ENCODE measurements at regions of chr5 and their contacts with region 1.

Region 1: DNA sequence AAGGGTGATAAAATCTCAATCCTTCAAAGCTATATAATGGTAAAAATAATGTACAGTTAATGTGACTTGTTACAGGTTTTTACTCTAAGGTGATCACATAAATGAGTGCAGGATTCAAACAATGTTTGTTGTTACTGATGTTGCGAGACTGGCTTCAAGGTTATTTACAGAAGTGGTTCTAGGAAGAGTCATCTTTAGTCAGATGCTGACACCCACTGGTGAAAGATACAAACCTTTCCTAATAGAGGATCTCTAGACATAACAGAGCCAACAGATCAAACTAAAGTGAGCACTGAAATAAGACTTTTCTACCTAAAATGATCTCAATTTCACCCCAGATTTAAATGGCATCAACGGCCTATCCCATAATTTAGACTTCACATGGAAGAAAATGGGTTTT is 20.2 kb downstream of the ARSB start:
- DNase-seq: peak; percentile 20
- H3K4me3 ChIP-seq: no peak overlapping the region
- H3K27ac ChIP-seq: no peak overlapping the region
- H3K4me1 ChIP-seq: no peaks in the 10 kb centered on the region
- H3K27me3 ChIP-seq: no peaks in the 10 kb centered on the region
- CTCF ChIP-seq: peak in 2 of 4 experiments; percentile 52 to 59
- POLR2A ChIP-seq: no peak

Region 2: GRCh38 chr5:78320401-78320800 is 644.5 kb before region 1 on chr5:
- intact Hi-C with region 1: loop called (anchors 10 kb)
- DNase-seq: no peak
- H3K4me3 ChIP-seq: no peak overlapping the region
- H3K27ac ChIP-seq: no peak overlapping the region
- H3K4me1 ChIP-seq: no peaks in the 10 kb centered on the region
- H3K27me3 ChIP-seq: no peaks in the 10 kb centered on the region
- CTCF ChIP-seq: peak in 2 of 4 experiments; percentile 53 to 62
- POLR2A ChIP-seq: no peak

Region 3: DNA sequence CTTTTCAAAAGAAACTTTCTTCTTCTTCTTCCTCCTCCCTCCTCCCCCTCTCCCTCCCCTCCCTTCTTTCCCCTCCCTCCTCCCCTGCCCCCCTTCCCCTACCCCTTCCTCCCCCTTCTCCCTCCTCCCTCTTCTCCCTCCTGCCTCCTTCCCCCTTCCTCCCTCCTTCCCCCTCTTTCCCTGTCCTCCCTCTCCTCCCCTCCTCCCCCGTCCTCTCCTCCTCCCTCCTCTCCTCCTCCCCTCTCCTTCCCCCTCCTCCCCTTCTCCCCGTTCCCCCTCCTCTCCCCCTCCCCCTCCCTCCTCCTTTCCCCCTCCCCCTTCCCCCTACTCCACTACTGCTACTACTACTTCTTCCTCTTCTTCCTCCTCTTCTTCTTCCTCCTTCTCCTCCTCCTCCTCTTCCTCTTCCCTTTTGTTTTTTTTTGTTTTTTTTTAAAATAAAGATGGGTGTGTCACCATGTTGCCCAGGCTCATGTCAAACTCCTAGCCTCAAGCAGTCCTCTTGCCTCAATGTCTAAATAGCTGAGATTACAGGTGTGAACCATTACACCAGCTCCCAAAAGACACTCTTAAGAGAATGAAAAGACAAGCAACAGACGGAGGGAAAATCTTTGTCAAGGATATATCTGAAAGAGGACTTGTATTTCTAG is 517.0 kb before region 1 on chr5:
- intact Hi-C with region 1: no loop called
- DNase-seq: no peak
- H3K4me3 ChIP-seq: no peak overlapping the region
- H3K27ac ChIP-seq: no peak overlapping the region
- H3K4me1 ChIP-seq: no peaks in the 10 kb centered on the region
- H3K27me3 ChIP-seq: no peaks in the 10 kb centered on the region
- CTCF ChIP-seq: no peak
- POLR2A ChIP-seq: no peak

Region 4: GRCh38 chr5:78467752-78468357 is 497.0 kb before region 1 on chr5:
- intact Hi-C with region 1: loop called (anchors 2 kb)
- DNase-seq: no peak
- H3K4me3 ChIP-seq: no peak overlapping the region
- H3K27ac ChIP-seq: no peak overlapping the region
- H3K4me1 ChIP-seq: no peaks in the 10 kb centered on the region
- H3K27me3 ChIP-seq: no peaks in the 10 kb centered on the region
- CTCF ChIP-seq: peak in 3 of 4 experiments; percentile 69 to 84 (median 70)
- POLR2A ChIP-seq: no peak

Region 5: DNA sequence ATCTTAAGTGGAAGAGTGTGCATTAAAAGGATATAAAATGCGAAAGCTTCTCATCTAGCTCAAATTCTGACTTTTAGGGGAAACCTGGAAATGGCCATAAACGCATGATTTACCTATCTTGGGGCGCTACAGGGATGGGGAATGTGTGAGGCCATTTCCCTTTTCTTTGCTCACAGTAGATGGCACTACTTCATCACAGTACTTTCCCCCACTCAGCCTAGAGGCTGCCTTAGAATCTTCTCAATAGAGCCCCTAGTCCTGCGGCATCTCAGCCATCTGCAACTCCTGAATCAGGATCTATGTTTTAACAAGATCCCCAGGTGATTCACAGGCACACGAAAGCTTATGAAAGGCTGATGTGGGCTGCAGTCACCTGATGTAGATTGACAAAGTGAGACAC is 427.1 kb before region 1 on chr5:
- intact Hi-C with region 1: loop called (anchors 5 kb)
- DNase-seq: no peak
- H3K4me3 ChIP-seq: no peak overlapping the region
- H3K27ac ChIP-seq: no peak overlapping the region
- H3K4me1 ChIP-seq: no peaks in the 10 kb centered on the region
- H3K27me3 ChIP-seq: no peaks in the 10 kb centered on the region
- CTCF ChIP-seq: peak in 3 of 4 experiments; percentile 19 to 55 (median 51)
- POLR2A ChIP-seq: no peak

Region 6: GRCh38 chr5:78648359-78649210 is 316.3 kb before region 1 on chr5 and contains the start of gene LHFPL2:
- intact Hi-C with region 1: loop called (anchors 10 kb)
- DNase-seq: peak; percentile 50
- H3K4me3 ChIP-seq: peak within 1 kb of the TSS; percentile 71 to 74
- H3K27ac ChIP-seq: peak within 1 kb of the TSS; percentile 84 to 91
- H3K4me1 ChIP-seq: no peaks in the 10 kb centered on the region
- H3K27me3 ChIP-seq: no peaks in the 10 kb centered on the region
- CTCF ChIP-seq: peak in 1 of 4 experiments; percentile 19
- POLR2A ChIP-seq: peak; percentile 26
- total RNA-seq, gene LHFPL2: 13.7 to 40.4 TPM

Measured in prostate gland (tissue), 2 donors.